CD4-positive, alpha-beta memory T cell (primary cell): ENCODE measurements at regions of chr3 and their contacts with region 1.

Region 1: DNA sequence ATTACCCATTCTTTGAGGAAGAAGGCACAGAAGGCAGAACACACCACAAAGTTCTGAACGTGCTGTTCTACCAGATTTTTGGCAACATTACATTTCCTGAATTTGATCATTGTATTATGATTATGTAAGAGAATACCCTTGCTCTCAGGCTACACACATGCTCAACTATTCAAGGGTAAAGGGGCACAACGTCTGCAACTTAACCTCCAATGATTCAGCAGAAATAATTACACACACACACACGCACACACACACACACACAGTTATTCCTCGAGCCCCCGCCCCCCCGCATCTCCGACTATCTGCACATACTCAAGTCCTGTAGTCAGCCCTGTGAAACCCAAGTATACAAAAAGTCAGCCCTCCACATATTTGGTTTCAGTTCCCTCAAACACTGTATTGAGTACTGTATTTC is 26.8 kb downstream of the RPN1 start:
- DNase-seq: no peak
- H3K4me3 ChIP-seq: no peak overlapping the region
- H3K4me3 Mint-ChIP-seq: no peak overlapping the region
- H3K27ac ChIP-seq: no peak overlapping the region
- H3K27ac Mint-ChIP-seq: peak overlapping the region in 2 of 7 donors; percentile 13 to 72
- H3K4me1 ChIP-seq: peaks cover 8% of the 10 kb centered on the region
- H3K4me1 Mint-ChIP-seq: peaks cover 9 to 23% (median 17%) of the 10 kb centered on the region in 4 donors
- H3K27me3 ChIP-seq: no peaks in the 10 kb centered on the region
- H3K27me3 Mint-ChIP-seq: no peaks in the 10 kb centered on the region

Region 2: DNA sequence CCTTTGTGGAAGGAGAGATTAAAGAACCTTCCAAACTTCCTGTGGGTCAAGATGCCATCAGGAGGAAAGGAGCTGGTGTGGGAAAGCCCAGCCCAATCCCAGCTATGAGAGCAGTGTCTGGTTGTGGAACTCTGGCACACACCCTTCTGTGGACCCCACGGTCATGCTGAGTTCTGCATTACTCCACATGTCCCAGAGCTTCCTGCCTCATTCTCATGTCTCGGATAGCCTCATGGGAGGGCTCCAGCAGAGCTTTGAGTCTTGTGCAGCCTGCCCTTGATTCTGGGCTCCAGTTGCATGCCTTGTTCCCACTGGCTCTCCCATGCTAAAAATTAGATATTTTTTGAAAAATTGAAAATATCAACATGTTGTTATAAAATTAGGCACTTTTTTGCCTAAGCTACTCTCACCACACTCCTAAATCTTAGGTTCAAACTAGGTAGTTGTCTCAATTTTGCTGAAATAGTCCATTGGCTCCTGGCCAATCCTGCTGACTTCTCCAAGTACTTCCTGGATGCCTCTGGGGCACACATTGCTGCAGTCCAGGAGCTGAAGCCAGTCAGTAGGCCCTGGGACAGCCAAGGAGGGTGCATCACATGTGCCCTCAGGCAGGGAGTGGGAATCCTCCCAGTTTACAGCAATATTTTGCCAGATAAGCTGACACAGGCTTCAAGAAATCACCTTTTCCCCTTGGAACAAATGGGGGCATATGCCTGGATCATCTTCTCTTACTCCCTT is 326.2 kb before region 1 on chr3:
- CTCF ChIA-PET with region 1: no interaction called
- POLR2A ChIA-PET with region 1: no interaction called
- intact Hi-C with region 1: no loop called
- DNase-seq: no peak
- H3K4me3 ChIP-seq: no peak overlapping the region
- H3K4me3 Mint-ChIP-seq: peak overlapping the region in 1 of 8 donors; percentile 26
- H3K27ac ChIP-seq: no peak overlapping the region
- H3K27ac Mint-ChIP-seq: peak overlapping the region in 5 of 7 donors; percentile 57 to 90 (median 57)
- H3K4me1 ChIP-seq: peaks cover 48% of the 10 kb centered on the region
- H3K4me1 Mint-ChIP-seq: peaks cover 35 to 49% (median 41%) of the 10 kb centered on the region in 4 donors
- H3K27me3 ChIP-seq: no peaks in the 10 kb centered on the region
- H3K27me3 Mint-ChIP-seq: no peaks in the 10 kb centered on the region

Region 3: DNA sequence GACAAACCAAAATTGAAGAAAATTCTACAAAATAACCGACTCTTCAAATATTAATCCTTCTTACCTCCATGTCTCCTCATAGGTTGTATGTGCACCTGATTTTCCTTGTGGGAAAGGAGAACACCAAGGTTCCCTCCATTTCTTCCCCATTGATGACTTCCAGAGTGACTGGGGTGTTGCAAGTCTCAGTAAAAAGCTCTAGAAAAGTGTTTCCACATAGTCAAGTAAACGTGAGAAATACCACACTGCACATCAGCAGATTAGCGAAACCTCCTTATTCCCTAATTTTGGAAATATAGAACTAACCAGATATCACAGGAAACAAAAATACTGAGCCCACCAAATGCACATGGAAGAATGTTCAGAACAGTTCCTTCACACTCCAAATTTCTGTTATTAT is 31.8 kb after region 1 on chr3:
- CTCF ChIA-PET with region 1: interaction called, 5 read pairs
- POLR2A ChIA-PET with region 1: interaction called, 9 read pairs
- intact Hi-C with region 1: loop called (anchors 1 kb)
- DNase-seq: no peak
- H3K4me3 ChIP-seq: no peak overlapping the region
- H3K4me3 Mint-ChIP-seq: peak overlapping the region in 7 of 8 donors; percentile 14 to 85 (median 59)
- H3K27ac ChIP-seq: no peak overlapping the region
- H3K27ac Mint-ChIP-seq: peak overlapping the region in 3 of 7 donors; percentile 16 to 42 (median 22)
- H3K4me1 ChIP-seq: no peaks in the 10 kb centered on the region
- H3K4me1 Mint-ChIP-seq: peaks cover 7 to 21% (median 9%) of the 10 kb centered on the region in 4 donors
- H3K27me3 ChIP-seq: no peaks in the 10 kb centered on the region
- H3K27me3 Mint-ChIP-seq: no peaks in the 10 kb centered on the region

Region 4: DNA sequence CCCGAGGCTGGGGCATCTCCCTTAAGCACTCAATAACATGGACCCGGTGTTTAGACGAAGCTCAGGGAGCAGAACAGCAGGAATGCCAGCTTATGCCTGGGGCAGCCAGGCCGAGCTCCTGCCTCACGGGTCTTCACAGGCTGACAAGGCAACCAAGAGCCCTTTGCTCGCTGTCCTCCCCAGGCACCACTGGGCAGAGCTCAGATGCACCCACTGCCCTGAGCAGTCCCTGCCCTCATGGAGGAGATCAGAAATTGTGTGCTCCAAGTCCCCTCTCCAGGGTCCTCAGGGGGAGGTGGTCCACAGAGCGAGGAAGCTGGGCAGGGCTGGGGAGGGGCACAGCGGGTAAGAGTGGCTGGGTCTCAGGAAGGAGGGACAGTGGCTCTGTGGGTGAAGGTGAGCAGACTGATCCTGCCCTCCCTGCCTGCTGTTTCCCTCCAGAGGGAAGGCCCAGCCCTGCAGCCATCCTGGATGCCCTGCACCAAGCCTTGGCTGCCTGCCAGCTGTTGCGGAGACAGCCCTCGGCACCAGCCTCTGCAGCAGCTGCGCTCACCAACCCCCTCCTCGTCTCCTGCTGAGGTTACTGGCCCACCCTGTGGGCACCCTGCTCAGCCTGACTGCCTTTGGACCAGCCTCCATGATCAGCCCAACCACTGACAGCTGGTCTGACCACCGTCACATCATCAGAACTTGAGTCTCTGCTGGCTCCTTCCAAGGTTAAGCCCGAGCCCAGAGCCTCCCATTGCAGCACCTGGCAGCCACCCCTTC is 415.7 kb after region 1 on chr3:
- CTCF ChIA-PET with region 1: no interaction called
- POLR2A ChIA-PET with region 1: no interaction called
- intact Hi-C with region 1: no loop called
- DNase-seq: no peak
- H3K4me3 ChIP-seq: no peak overlapping the region
- H3K4me3 Mint-ChIP-seq: no peak overlapping the region
- H3K27ac ChIP-seq: no peak overlapping the region
- H3K27ac Mint-ChIP-seq: peak overlapping the region in 1 of 7 donors; percentile 12
- H3K4me1 ChIP-seq: peaks cover 9% of the 10 kb centered on the region
- H3K4me1 Mint-ChIP-seq: peaks cover 3 to 21% (median 10%) of the 10 kb centered on the region in 4 donors
- H3K27me3 ChIP-seq: peaks cover 7% of the 10 kb centered on the region
- H3K27me3 Mint-ChIP-seq: peaks cover 11 to 17% of the 10 kb centered on the region in 2 donors

Region 5: GRCh38 chr3:129490242-129491045 is 866.7 kb after region 1 on chr3:
- CTCF ChIA-PET with region 1: no interaction called
- POLR2A ChIA-PET with region 1: no interaction called
- intact Hi-C with region 1: no loop called
- DNase-seq: peak in 4 of 5 donors; percentile 48 to 61 (median 56)
- H3K4me3 ChIP-seq: no peak overlapping the region
- H3K4me3 Mint-ChIP-seq: no peak overlapping the region
- H3K27ac ChIP-seq: no peak overlapping the region
- H3K27ac Mint-ChIP-seq: peak overlapping the region in 4 of 7 donors; percentile 30 to 55 (median 46)
- H3K4me1 ChIP-seq: no peaks in the 10 kb centered on the region
- H3K4me1 Mint-ChIP-seq: peaks cover 0 to 4% (median 0%) of the 10 kb centered on the region in 4 donors
- H3K27me3 ChIP-seq: no peaks in the 10 kb centered on the region
- H3K27me3 Mint-ChIP-seq: no peaks in the 10 kb centered on the region